Endothelial cell of umbilical vein (primary cell): ENCODE measurements at regions of chr4 and their contacts with region 1.

Region 1: DNA sequence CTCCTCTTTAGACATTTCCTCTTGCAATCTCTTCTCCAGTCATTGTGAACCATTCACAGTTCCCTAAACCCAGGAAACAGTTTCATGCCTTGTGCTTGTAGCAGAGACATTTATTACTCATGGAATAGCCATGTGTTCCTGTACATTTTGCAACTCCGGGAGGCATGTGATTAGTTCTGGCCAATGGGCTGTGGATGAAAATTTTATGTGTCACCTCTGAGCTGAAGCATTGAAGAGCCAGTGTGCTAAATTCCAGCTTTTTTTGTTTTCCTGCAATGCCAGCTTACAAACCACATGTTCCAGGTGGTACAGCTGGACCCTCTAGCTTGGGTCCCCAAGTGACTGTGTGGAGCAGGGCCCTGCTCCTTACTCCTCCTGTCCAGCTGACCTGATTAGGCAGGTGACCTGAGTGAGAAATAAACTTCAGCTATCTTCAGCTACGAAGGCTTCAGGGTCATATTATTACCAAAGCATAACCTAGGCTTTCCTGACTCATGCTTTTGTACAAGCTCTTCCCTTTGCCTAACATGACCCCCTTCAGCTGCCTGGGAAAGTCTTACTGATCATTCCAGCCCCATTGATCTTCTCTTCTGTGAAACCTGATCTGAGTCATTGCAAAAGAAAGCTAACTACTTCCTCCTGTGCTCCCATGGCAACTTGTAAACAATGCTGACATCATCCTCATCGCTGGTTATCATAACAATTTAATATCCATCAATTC is 200.4 kb downstream of the PTTG2 start:
- DNase-seq: peak; percentile 91
- H3K4me3 ChIP-seq: no peak overlapping the region
- H3K27ac ChIP-seq: peak overlapping the region; percentile 95
- H3K4me1 ChIP-seq: peaks cover 33% of the 10 kb centered on the region
- H3K27me3 ChIP-seq: peaks cover 0 to under 1% of the 10 kb centered on the region in 2 experiments
- CTCF ChIP-seq: no peak
- POLR2A ChIP-seq: no peak

Region 2: DNA sequence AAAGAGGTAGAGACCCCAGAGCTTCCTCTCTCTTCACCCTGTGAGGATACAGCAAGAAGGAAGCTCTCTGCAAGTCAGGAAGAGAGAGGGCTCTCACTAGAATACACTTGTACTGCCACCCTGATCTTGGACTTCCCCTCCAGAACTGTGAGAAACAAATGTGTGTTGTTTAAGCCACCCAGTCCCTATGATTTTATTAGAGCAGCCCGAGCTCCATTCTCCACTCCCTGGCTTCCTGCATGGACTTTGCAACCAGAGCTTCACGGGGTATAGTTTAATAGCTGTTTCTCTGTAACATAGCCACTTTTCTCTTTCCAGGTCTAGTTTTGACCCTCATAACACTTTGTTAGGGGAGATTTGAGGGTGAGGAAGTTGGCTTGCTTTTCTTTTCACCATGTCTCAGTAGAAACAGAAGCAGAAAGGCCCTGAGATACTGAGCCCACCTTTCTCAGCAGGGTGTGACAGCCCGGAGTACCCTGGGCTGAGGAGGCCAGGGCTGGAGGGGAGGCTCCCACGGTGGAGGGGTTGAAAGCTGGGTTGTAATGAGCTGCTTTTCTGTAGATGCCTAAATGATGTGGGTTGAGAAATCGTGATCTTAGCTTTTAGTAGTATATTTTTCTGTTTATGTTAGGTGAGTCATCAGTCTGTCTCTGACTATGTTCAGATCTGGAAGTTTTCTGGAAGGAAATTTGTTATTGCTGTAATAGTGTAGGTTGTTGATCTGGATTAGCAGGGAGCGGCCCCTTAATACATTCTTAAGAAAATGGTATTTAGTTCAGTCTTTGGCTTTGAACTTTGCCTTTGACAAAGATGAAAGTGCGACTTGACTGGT is 81.8 kb before region 1 on chr4:
- CTCF ChIA-PET with region 1: interaction called, 4 read pairs
- POLR2A ChIA-PET with region 1: interaction called, 6 read pairs
- dilution Hi-C with region 1: no loop called
- intact Hi-C with region 1: loop called (anchors 5 kb)
- DNase-seq: peak; percentile 81
- H3K4me3 ChIP-seq: no peak overlapping the region
- H3K27ac ChIP-seq: peak overlapping the region; percentile 76
- H3K4me1 ChIP-seq: peaks cover 41% of the 10 kb centered on the region
- H3K27me3 ChIP-seq: no peaks in the 10 kb centered on the region
- CTCF ChIP-seq: no peak
- POLR2A ChIP-seq: no peak

Region 3: DNA sequence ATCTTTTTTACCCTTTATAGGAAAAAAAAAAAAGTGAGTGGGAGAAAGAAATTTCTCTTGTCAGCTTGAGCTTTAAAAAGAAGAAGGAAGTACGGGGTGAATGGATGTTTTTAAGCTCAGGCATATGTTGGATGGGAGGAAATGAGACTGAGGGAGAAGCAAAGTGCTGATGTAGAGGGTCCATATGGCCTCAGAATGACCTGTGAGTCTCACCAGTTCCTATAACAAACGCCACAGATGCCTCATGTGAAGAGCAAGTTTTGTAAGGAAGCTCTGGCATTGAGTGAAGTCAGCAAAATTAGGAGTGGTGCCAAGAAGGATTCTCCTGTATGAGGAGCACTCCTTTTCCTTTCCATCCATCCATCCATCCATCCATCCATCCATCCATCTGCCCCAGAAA is 14.2 kb after region 1 on chr4:
- CTCF ChIA-PET with region 1: interaction called, 38 read pairs
- POLR2A ChIA-PET with region 1: no interaction called
- dilution Hi-C with region 1: no loop called
- intact Hi-C with region 1: no loop called
- DNase-seq: peak; percentile 16
- H3K4me3 ChIP-seq: no peak overlapping the region
- H3K27ac ChIP-seq: no peak overlapping the region
- H3K4me1 ChIP-seq: peaks cover 18% of the 10 kb centered on the region
- H3K27me3 ChIP-seq: peaks cover 2 to 7% of the 10 kb centered on the region in 2 experiments
- CTCF ChIP-seq: no peak
- POLR2A ChIP-seq: no peak

Region 4: GRCh38 chr4:38190717-38191178 is 30.1 kb after region 1 on chr4:
- CTCF ChIA-PET with region 1: interaction called, 3 read pairs
- POLR2A ChIA-PET with region 1: no interaction called
- dilution Hi-C with region 1: no loop called
- intact Hi-C with region 1: loop called (anchors 1 kb)
- DNase-seq: peak; percentile 88
- H3K4me3 ChIP-seq: no peak overlapping the region
- H3K27ac ChIP-seq: peak overlapping the region; percentile 43
- H3K4me1 ChIP-seq: peaks cover 24% of the 10 kb centered on the region
- H3K27me3 ChIP-seq: peaks cover 5 to 11% of the 10 kb centered on the region in 2 experiments
- CTCF ChIP-seq: no peak
- POLR2A ChIP-seq: no peak

Region 5: DNA sequence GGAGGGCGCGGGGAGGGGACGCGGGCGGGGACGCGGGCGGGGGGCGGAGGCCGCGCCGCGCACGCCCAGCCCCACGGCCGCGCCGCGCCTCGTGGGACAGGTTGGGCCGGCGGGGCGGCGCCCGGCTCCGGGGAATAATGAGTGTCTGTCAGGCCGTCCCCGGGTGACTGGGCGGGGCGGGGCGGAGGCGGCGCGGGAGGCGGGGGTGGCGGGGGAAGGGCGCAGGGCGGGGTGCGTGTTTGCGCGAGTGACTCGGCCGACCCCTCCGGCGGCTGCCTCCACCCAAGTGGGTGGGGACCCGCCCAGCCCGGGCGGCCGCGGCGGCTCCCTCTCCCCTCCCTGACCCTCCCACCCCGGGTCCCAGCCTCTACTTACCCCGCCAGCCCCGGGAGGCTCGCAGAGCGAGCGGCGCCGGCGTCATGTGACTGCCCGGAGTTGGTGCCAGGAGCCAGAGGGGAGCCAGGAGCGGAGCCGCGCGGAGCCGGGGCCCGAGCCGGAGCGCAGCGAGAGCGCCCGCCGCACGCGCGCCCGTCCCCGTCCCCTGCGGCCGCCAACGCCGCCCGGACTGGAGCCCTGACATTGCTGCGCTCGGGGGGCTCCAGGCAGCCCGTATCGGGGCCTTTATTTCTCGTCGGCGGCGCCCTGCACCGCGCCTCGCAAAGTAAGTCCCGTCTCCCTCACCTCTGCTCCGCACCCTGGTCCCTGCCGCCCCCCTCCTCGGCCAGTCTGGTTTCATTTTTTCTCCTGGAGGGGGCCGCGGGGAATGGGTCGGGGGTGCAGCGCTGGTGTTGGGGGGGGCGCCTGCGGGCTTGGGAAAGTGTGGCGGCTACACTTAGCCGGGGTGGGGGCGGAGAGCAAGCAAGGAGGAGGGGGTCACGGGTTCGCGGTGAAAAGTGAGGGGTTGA is 503.4 kb after region 1 on chr4 and contains the start of gene KLF3:
- CTCF ChIA-PET with region 1: interaction called, 3 read pairs
- POLR2A ChIA-PET with region 1: no interaction called
- dilution Hi-C with region 1: loop called (anchors 25 kb)
- intact Hi-C with region 1: loop called (anchors 1 kb)
- DNase-seq: peak; percentile 86
- H3K4me3 ChIP-seq: peak within 1 kb of the TSS; percentile 81 to 89 (median 88)
- H3K27ac ChIP-seq: peak within 1 kb of the TSS; percentile 99
- H3K4me1 ChIP-seq: peaks cover 28% of the 10 kb centered on the region
- H3K27me3 ChIP-seq: no peaks in the 10 kb centered on the region
- CTCF ChIP-seq: no peak
- POLR2A ChIP-seq: peak; percentile 56
- total RNA-seq, gene KLF3: 50.5 and 51.8 TPM in 2 replicates

Region 6: DNA sequence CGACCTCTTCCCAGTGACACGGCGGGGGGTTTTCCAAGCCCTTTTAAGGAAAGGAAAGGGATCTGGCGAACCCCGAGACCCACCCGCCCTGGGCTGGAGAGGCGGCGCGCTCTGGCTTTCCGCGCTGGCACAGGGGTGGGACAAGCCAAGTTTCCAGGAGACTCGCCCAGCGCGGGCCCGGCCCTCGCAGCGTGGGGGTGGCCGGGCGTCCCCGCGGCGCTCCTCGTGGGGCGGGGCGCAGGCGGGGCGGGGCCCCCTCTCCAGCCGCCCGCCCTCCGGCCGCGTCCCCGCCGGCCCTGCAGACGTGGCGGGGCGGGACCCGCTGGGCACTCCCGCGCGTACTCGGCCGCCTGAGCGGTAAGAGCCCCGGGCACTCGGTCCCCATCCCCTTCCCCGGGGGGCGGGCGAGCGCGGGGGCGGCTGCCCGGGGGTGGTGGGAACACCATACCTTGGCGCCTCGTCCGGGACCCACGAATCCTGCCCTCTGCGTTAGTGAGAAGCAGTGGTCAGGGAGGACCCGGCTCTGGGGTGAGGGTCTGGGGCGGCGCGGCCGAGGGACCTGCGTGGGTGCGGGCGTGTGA is 706.9 kb after region 1 on chr4 and contains the start of gene FAM114A1:
- CTCF ChIA-PET with region 1: no interaction called
- POLR2A ChIA-PET with region 1: no interaction called
- dilution Hi-C with region 1: no loop called
- intact Hi-C with region 1: loop called (anchors 5 kb)
- DNase-seq: peak; percentile 80
- H3K4me3 ChIP-seq: peak within 1 kb of the TSS; percentile 19 to 90 (median 57)
- H3K27ac ChIP-seq: peak within 1 kb of the TSS; percentile 89
- H3K4me1 ChIP-seq: peaks cover 23% of the 10 kb centered on the region
- H3K27me3 ChIP-seq: peaks cover 0 to 2% of the 10 kb centered on the region in 2 experiments
- CTCF ChIP-seq: no peak
- POLR2A ChIP-seq: peak; percentile 32
- total RNA-seq, gene FAM114A1: 99.2 and 101 TPM in 2 replicates